ENCODE measurements at regions of chr15 and their contacts with region 1.

Region 1: DNA sequence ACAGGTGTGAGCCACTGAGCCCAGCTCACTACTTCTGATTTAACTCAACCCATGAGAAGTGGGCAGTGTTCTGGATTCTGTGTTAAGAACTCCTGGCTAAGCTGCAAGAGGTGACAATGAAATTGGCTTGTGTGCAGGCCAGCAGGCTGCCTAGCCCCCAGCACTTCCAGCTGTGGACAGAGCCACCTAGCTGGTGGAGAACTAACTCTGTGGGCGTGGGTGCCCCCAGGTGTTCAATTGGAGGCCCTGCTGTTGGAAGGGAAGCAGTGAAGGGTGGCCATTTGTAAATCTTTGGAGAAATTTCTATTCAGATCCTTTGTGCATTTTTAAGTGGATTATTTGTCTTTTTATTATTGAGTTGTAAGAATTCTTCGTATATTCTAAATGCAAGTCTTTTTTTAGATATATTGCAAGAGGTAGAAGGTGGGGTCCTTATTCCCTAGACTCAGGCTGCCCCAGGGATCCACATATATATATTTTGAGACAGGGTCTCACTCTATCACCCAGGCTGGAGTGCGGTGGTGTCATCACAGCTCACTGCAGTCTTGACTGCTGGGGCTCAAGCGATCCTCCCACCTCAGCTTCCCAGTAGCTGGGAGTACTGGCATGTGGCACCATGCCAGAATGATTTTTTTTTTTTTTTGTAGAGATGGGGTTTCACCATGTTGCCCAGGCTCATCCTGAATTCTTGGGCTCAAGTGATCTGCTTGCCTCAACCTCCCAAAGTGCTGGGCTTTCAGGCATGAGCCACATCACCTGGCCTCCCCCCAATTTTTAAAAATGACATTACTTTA is 7.2 kb upstream of the SCAMP5 start:
- DNase-seq: peak; percentile 59 to 60
- H3K4me3 ChIP-seq: no peak overlapping the region
- H3K27ac ChIP-seq: no peak overlapping the region
- H3K4me1 ChIP-seq: peaks cover 16% of the 10 kb centered on the region
- H3K27me3 ChIP-seq: peaks cover 25% of the 10 kb centered on the region
- CTCF ChIP-seq: peak; percentile 83

Region 2: GRCh38 chr15:74889883-74890664 is 98.1 kb before region 1 on chr15 and contains the start of gene MPI:
- CTCF ChIA-PET with region 1: interaction called, 10 read pairs
- POLR2A ChIA-PET with region 1: no interaction called
- intact Hi-C with region 1: no loop called
- DNase-seq: peak; percentile 63 to 77
- H3K4me3 ChIP-seq: peak within 1 kb of the TSS; percentile 70
- H3K27ac ChIP-seq: no peak within 1 kb of the TSS
- H3K4me1 ChIP-seq: peaks cover 33% of the 10 kb centered on the region
- H3K27me3 ChIP-seq: no peaks in the 10 kb centered on the region
- CTCF ChIP-seq: no peak
- total RNA-seq, gene MPI: 22.5 and 23.0 TPM in 2 replicates

Region 3: DNA sequence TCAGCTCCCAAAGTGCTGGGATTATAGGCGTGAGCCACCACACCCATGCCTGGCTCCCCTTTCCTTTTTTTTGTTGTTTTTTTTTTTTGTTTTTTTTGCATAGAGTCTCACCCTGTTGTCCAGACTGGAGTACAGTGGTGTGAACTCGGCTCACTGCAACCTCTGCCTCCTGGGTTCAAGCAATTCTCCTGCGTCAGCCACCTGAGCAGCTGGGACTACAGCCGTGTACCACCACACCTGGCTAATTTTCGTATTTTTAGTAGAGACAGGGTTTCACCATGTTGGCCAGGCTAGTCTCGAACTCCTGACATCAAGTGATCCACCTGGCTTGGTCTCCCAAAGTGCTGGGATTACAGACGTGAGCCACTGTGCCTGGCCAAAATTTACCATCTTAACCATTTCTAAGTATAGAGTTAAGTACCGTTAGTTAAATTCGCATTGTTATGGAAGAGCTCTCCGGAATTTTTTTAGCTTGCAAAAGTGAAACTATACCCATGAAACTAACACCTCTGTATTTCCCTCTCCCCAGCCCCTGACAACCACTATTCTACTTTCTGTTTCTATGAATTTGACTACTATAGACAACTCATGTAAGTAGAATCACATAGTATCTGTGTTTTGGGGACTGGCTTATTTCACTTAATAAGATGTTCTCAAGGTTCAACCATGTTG is 142.5 kb after region 1 on chr15:
- CTCF ChIA-PET with region 1: no interaction called
- POLR2A ChIA-PET with region 1: no interaction called
- intact Hi-C with region 1: no loop called
- DNase-seq: no peak
- H3K4me3 ChIP-seq: no peak overlapping the region
- H3K27ac ChIP-seq: no peak overlapping the region
- H3K4me1 ChIP-seq: peaks cover 17% of the 10 kb centered on the region
- H3K27me3 ChIP-seq: no peaks in the 10 kb centered on the region
- CTCF ChIP-seq: no peak

Measured in PC-9 (cell line).